ENCODE measurements at regions of chr4 and their contacts with region 1.

Region 1: GRCh38 chr4:87235020-87235671 is 14.7 kb upstream of the KLHL8 start:
- DNase-seq: no peak
- H3K4me3 ChIP-seq: peak overlapping the region; percentile 1 to 63 (median 30)
- H3K27ac ChIP-seq: peak overlapping the region in 1 of 8 donors; percentile 74
- H3K4me1 ChIP-seq: peaks cover 0 to 16% (median 1%) of the 10 kb centered on the region in 6 donors
- H3K27me3 ChIP-seq: no peaks in the 10 kb centered on the region
- CTCF ChIP-seq: no peak
- POLR2A ChIP-seq: no peak

Region 2: DNA sequence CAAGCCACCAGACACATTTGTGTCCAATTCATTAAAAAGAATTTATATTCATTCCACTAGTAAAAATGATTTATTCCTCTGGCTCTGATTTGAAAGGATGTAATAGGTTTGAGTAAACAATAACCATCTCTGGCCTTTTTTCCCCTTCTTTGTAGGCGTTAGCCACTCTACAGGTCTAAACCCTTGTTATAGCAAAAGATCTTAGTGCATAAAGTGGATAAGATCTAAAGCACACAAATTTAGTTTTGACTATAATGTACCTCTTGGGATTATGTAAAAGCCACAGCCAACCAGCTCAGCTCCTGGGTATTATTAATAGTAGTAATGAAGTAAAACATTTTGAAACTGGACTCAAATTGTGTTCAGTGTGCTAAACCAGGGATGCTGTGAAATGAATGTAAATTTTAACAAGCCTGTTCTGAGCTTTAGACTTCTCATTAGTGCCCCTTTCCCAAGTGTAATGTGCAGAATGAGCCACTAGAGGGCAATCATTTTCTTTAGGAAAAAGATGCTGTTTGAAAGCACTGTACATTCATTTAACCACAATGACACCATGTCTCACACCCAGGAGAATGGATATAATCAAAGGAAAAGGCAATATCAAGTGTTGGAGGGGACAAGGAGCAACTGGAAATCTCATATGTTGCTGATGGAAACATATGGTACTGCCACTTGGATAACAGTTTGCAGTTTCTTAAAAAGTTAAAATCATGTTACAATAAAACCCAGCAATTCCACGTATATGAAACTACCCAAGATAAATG is 84.5 kb before region 1 on chr4:
- intact Hi-C with region 1: loop called (anchors 5 kb)
- DNase-seq: no peak
- H3K4me3 ChIP-seq: no peak overlapping the region
- H3K27ac ChIP-seq: no peak overlapping the region
- H3K4me1 ChIP-seq: peaks cover 0 to 3% (median 0%) of the 10 kb centered on the region in 6 donors
- H3K27me3 ChIP-seq: no peaks in the 10 kb centered on the region
- CTCF ChIP-seq: peak; percentile 72 to 96 (median 92)
- POLR2A ChIP-seq: no peak

Measured in spleen (tissue), 13 donors.